ENCODE measurements at regions of chr10 and their contacts with region 1.

Region 1: DNA sequence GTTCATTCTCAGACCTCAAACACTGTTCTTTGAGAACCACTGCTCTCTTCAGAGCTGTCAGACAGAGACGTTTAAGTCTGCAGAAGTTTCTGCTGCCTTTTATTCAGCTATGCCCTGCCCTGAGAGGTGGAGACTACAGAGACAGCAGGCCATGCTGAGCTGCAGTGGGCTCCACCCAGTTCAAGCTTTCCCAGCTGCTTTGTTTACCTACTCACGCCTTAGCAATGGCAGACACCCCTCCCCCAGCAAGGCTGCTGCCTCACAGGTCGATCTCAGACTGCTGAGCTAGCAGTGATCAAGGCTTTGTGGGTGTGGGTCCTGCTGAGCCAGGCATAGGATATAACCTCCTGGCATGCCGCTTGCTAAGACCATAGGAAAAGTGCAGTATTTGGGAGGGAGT is 80.5 kb upstream of the CYP2C9 start:
- DNase-seq: no peak
- H3K4me3 ChIP-seq: no peak overlapping the region
- H3K27ac ChIP-seq: no peak overlapping the region
- H3K27me3 ChIP-seq: peaks cover 0 to 7% (median 0%) of the 10 kb centered on the region in 45 donors
- CTCF ChIP-seq: no peak

Region 2: DNA sequence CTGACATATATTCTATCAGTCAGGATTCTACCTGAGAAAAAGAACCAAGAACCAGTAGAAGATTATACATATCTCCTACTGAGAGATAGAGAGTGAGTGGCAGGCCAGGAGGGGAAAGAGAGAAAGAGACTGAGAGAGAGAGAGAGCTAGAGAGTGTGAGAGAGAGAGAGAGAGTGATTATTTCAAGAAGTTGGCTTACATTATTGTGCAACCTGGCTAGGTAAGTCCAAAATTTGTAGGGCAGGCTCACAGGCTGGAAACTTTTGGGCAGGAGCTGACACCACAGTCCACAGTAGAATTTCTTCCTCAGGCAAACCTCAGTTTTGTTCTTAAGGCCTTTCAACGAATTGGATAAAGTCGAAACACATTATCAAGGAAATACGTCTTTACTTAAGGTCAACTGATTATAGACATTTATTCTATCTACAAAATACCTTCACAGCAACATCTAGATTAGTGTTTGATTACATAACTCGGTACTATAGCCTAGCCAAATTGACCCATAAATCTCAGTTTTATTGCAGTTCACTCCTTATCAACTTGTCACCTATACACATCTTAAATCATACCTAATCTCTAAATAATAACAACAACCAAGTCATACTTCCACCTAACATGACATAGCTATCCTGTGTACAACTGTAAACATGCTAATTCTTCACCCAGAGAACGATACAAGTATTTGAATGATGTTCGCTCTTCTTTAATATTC is 191.5 kb before region 1 on chr10:
- intact Hi-C with region 1: no loop called
- DNase-seq: no peak
- H3K4me3 ChIP-seq: no peak overlapping the region
- H3K27ac ChIP-seq: no peak overlapping the region
- H3K27me3 ChIP-seq: peaks cover 0 to 9% (median 0%) of the 10 kb centered on the region in 45 donors
- CTCF ChIP-seq: no peak

Region 3: DNA sequence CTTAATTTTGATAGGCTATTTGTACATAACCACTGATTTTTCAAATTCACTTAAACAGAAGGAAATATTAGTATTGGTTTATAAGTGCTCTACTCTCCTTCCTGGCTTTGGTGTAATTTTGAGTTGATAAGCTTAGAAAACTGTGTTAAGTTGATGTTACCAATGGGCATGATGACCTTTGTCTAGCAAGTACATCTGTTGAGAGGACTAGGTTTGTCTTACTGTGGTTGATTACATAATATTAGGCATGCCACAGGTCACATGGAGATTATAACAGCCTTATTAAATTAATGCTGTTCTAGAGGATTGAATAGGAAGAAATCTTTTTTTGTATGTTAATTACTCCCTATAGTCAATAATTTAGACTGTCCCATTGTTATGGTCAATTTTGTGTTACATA is 147.4 kb before region 1 on chr10:
- intact Hi-C with region 1: loop called in 1 of 2 experiments (anchors 5 kb)
- DNase-seq: no peak
- H3K4me3 ChIP-seq: no peak overlapping the region
- H3K27ac ChIP-seq: no peak overlapping the region
- H3K27me3 ChIP-seq: no peaks in the 10 kb centered on the region
- CTCF ChIP-seq: no peak

Measured in dorsolateral prefrontal cortex (tissue), 120 donors.